HepG2 (cell line): ENCODE measurements at regions of chr2 and their contacts with region 1.

Region 1: GRCh38 chr2:171922230-171923022 is at the start of gene HAT1:
- DNase-seq: peak; percentile 94
- ATAC-seq: peak; percentile 94
- H3K4me3 ChIP-seq: peak within 1 kb of the TSS; percentile 87 to 95 (median 87)
- H3K27ac ChIP-seq: peak within 1 kb of the TSS; percentile 83
- H3K4me1 ChIP-seq: peaks cover 32% of the 10 kb centered on the region
- H3K27me3 ChIP-seq: peaks cover 0 to 3% of the 10 kb centered on the region in 2 experiments; a peak in 1 of 5 replicates
- CTCF ChIP-seq: no peak
- EP300 ChIP-seq: peak; percentile 3 to 7; a peak in 2 of 4 replicates
- POLR2A ChIP-seq: peak in 1 of 2 experiments; percentile 81; a peak in 3 of 4 replicates
- RAD21 ChIP-seq: 0 out of 2 replicates have a peak, but pooled peaks have one; percentile 40
- total RNA-seq, gene HAT1: 119 and 195 TPM in 2 replicates

Region 2: DNA sequence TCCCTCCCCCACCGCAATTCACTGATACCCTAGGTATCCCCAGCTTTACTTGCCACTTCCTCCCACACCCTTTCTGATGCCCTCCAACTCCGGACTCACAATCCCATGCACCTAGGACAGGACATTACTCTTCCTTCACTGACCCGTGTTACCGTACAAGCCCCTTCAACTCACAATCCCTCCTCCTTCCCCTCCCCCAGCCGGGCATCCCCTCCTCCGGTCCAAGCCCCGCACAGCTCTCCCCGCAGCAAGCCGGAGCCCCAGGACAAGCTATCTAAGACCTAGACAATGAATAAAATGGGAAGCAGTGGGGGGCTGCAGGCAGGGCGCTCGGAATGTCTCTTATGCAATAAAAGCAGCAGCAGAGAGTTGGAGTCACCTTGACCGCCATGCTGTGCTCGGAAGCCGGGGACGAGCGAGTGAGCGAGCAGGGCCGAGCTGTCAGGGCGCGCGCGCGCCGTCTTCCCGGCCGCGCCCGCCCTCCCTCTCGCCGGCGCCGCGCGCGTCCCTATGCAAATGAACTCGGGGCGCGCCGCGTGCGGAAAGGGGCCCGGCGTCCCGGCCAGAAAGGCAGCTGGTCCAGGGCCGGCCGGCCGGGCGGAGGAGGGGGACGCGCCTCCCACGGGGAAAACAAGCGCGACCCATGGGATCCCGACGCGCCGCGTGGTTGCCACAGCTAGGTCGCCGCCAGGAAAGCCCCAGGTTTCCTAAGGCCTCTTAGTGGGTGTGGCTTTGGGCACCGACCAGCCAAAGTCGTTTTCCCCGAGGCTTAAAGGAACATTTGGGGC is 28.4 kb before region 1 on chr2 and contains the start of gene SLC25A12:
- CTCF ChIA-PET with region 1: no interaction called
- POLR2A ChIA-PET with region 1: interaction called, 11 read pairs
- in situ Hi-C with region 1: no loop called
- intact Hi-C with region 1: loop called (anchors 1 kb)
- DNase-seq: peak; percentile 71
- ATAC-seq: peak; percentile 95
- H3K4me3 ChIP-seq: peak within 1 kb of the TSS; percentile 84 to 89 (median 88)
- H3K27ac ChIP-seq: peak within 1 kb of the TSS; percentile 1
- H3K4me1 ChIP-seq: peaks cover 36% of the 10 kb centered on the region
- H3K27me3 ChIP-seq: no peaks in the 10 kb centered on the region; a peak in 1 of 5 replicates
- CTCF ChIP-seq: no peak
- EP300 ChIP-seq: no peak
- POLR2A ChIP-seq: peak; percentile 59 to 66; a peak in 3 of 4 replicates
- RAD21 ChIP-seq: peak; percentile 61
- total RNA-seq, gene SLC25A12: 8.1 and 13.4 TPM in 2 replicates